ENCODE measurements at regions of chr9 and their contacts with region 1.

Region 1: DNA sequence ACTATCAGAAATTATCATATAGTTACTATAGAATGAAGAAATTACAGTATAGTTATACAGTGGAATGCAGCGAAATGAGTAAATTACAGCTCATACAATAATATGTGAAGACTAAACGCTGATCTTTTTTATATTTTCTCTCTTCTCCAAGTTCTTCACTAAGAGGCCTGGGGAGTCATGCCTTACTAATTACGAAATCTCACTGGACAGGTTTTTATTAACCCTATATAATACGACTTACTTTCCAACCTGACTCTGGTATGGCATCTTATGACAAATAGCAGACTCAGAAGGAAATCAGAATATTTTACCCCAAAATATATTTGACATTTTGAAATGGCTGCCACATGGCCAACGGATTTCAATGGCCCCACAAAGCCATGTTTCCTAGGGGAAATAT is 9.1 kb downstream of the CARNMT1 start:
- DNase-seq: no peak
- CTCF ChIP-seq: no peak

Region 2: DNA sequence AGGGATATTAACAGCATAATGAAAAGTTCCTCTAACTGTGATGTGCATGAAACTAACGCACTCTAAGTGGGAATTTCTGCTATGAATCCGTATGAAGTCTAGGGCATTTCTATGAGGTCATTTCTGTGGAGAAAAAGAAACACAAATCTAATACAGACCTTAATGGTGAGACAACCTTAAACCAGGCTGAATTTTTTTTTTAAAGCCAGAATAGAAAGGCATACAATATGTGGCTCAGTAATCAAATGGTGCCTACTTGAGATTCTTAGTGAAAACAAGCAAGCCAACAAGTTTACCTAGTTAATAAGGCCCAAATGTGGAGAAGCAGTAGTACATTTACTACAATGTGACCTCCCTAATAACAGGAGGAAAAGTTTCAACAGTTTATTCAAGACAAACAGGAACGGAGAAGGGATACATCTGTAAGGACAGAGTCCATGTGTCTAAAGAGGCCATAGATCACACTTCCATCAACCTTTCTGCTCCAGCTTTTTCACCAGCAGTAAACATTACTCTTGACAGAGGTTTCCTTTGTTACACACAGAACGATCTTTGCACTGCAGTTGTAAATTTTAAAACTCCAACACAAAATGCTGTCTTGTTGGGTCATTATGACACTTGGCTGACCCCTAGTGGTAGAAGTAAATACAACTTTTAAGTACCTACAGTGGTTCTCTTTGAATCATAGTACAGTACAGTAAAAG is 17.2 kb before region 1 on chr9:
- CTCF ChIA-PET with region 1: interaction called, 16 read pairs
- POLR2A ChIA-PET with region 1: no interaction called
- DNase-seq: peak; percentile 35
- CTCF ChIP-seq: peak; percentile 51